Breast epithelium (tissue), 4 donors: ENCODE measurements at regions of chr6 and their contacts with region 1.

Region 1: GRCh38 chr6:162856885-162857284 is 129.1 kb downstream of the PACRG start:
- DNase-seq: peak in 1 of 2 donors; percentile 43
- H3K4me3 ChIP-seq: peak overlapping the region in 2 of 3 donors; percentile 40 to 56
- H3K27ac ChIP-seq: peak overlapping the region; percentile 45 to 59
- H3K4me1 ChIP-seq: no peaks in the 10 kb centered on the region
- H3K27me3 ChIP-seq: no peaks in the 10 kb centered on the region
- CTCF ChIP-seq: peak in 2 of 3 donors; percentile 41 to 45
- POLR2A ChIP-seq: no peak

Region 2: GRCh38 chr6:162525181-162525580 is 331.7 kb before region 1 on chr6:
- intact Hi-C with region 1: no loop called
- DNase-seq: no peak
- H3K4me3 ChIP-seq: no peak overlapping the region
- H3K27ac ChIP-seq: no peak overlapping the region
- H3K4me1 ChIP-seq: no peaks in the 10 kb centered on the region
- H3K27me3 ChIP-seq: no peaks in the 10 kb centered on the region
- CTCF ChIP-seq: no peak
- POLR2A ChIP-seq: no peak

Region 3: DNA sequence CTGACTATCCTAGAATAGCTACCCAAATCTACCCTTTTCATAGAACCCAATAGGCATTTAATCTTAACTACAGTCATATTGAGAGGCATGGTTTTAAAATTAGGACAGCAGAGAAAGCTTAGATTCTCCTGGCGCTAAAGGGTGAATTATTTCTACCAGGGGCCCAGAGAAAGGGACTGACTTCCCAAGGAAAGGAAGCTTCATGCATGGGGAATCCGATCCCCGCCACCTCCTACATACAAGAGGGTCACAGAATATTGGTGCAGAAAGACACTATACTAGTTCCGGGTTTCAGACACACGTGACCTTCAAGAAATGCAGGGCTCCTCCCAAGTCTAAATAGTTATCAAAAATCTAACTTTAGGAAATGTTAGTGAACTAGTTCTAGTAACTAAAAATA is 260.2 kb before region 1 on chr6:
- intact Hi-C with region 1: loop called (anchors 5 kb)
- DNase-seq: no peak
- H3K4me3 ChIP-seq: no peak overlapping the region
- H3K27ac ChIP-seq: no peak overlapping the region
- H3K4me1 ChIP-seq: no peaks in the 10 kb centered on the region
- H3K27me3 ChIP-seq: no peaks in the 10 kb centered on the region
- CTCF ChIP-seq: no peak
- POLR2A ChIP-seq: no peak

Region 4: DNA sequence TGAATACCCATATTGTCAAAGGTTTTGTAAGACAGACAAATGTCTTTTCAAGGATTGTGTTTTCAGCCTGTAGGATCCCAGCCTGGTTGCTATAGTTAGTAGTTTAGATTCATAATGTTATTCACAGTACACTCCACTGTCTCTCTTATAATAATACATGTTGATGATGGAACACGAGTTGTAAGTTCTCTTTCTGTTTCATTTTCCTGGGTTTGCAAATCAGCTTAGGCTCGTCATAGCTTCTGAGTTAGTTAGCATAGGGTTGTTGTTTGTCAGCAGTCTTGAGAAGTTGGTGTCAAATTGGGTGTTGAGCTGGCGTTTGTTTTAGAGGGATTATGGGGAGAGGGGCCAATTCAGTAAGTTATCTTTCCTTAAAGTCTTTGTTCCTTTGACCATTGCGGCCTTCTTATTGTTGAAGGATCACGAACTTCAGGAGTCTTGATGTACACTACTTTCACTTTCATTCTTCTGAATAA is 603.5 kb after region 1 on chr6:
- intact Hi-C with region 1: no loop called
- DNase-seq: no peak
- H3K4me3 ChIP-seq: peak overlapping the region; percentile 26 to 57 (median 32)
- H3K27ac ChIP-seq: peak overlapping the region; percentile 27 to 41
- H3K4me1 ChIP-seq: peaks cover 0 to 8% of the 10 kb centered on the region in 2 donors
- H3K27me3 ChIP-seq: no peaks in the 10 kb centered on the region
- CTCF ChIP-seq: no peak
- POLR2A ChIP-seq: no peak